Activated B cell treated with CpG ODN at 0.5 μM for 24 hours (primary cell): ENCODE measurements at regions of chr7 and their contacts with region 1.

Region 1: DNA sequence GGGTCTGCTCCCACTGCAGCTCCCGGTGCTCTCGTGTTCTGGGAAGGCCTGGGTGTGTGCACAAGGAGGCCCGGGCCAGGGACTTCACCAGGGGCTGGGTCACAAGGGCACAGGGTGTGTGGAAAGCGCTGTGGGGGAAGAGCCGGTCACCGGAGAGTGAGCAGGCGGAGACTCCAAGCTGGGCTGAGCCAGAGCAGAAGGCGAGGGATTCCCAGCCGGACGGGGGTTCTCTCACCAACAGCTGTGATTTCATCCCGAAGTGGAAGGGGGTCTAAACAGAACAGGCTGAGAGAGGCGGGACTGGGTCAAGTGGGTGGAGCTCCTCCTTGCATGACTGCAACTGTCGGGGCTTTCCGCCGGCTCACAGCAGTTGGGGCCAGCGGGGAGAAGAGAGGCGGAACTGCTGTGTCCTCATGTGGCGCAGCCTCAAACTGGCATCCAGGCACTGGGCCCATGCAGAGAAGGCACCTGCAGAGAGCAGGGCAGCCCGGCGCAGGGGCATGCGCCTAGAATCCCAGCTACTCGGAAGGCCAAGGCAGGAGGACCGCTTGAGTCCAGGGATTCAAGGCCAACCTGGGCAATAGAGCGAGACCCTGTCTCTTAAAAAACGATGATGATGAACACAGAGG is 7.6 kb upstream of the ORAI2 start:
- DNase-seq: peak; percentile 81
- ATAC-seq: peak; percentile 76
- H3K4me3 Mint-ChIP-seq: peak overlapping the region; percentile 76
- H3K27ac Mint-ChIP-seq: peak overlapping the region; percentile 100
- H3K4me1 Mint-ChIP-seq: peaks cover 95% of the 10 kb centered on the region
- H3K27me3 Mint-ChIP-seq: no peaks in the 10 kb centered on the region
- CTCF ChIP-seq: no peak

Region 2: GRCh38 chr7:101308245-101309085 is 1117.3 kb before region 1 on chr7:
- CTCF ChIA-PET with region 1: no interaction called
- POLR2A ChIA-PET with region 1: no interaction called
- intact Hi-C with region 1: no loop called
- DNase-seq: no peak
- ATAC-seq: peak; percentile 77
- H3K4me3 Mint-ChIP-seq: peak overlapping the region; percentile 90
- H3K27ac Mint-ChIP-seq: peak overlapping the region; percentile 35
- H3K4me1 Mint-ChIP-seq: peaks cover 7% of the 10 kb centered on the region
- H3K27me3 Mint-ChIP-seq: peaks cover 31% of the 10 kb centered on the region
- CTCF ChIP-seq: no peak

Region 3: GRCh38 chr7:102193806-102194205 is 231.9 kb before region 1 on chr7:
- CTCF ChIA-PET with region 1: no interaction called
- POLR2A ChIA-PET with region 1: no interaction called
- intact Hi-C with region 1: no loop called
- DNase-seq: no peak
- ATAC-seq: no peak
- H3K4me3 Mint-ChIP-seq: no peak overlapping the region
- H3K27ac Mint-ChIP-seq: no peak overlapping the region
- H3K4me1 Mint-ChIP-seq: no peaks in the 10 kb centered on the region
- H3K27me3 Mint-ChIP-seq: no peaks in the 10 kb centered on the region
- CTCF ChIP-seq: no peak

Region 4: DNA sequence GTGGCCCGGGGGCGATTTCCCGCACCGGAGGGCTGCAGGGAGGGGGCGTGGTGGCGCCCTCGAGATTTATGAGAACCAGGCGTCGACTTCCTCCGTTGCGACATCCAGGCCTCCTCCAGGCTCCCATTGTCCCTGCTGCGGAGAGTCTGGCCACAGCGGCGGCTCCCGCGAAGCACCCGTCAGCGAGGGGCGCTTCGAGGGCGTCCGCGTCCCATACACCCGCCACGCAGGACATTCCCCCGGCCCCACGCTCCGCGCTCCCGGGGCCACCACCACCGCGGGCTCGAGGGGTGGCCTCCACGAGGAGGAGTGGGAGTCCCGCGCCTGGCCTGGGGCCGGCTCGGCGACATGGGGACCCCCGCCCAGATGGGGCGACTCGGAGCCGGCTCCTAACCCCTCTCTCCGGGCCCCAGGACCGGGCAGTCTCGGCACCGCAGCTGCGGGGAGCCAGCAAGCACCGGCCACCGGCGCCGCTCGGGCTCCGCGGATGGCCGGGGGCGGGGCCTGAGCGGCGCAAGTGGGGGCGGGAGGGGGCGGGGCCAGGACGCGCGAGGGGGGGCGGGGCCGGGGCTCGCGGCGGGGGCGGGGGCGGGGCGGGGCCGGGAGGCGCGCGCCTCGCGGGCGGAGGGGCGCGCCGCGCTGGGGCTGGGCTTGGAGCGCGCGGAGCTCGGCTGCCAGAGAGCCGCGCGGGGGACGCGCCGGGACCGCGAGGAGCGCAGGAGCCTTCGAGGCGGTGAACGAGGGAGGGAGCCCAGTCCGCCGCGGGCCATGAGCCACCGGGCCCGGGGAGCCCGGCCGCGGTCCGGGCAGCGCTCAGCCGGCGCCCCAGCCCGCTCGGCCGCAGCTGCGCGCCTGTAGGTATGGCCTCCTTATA is 139.3 kb before region 1 on chr7 and contains the start of gene SH2B2:
- CTCF ChIA-PET with region 1: no interaction called
- POLR2A ChIA-PET with region 1: interaction called, 12 read pairs
- intact Hi-C with region 1: no loop called
- DNase-seq: peak; percentile 83
- ATAC-seq: peak; percentile 38
- H3K4me3 Mint-ChIP-seq: peak within 1 kb of the TSS; percentile 83
- H3K27ac Mint-ChIP-seq: peak within 1 kb of the TSS; percentile 53
- H3K4me1 Mint-ChIP-seq: peaks cover 64% of the 10 kb centered on the region
- H3K27me3 Mint-ChIP-seq: no peaks in the 10 kb centered on the region
- CTCF ChIP-seq: no peak
- total RNA-seq, gene SH2B2: 28.2 and 32.1 TPM in 2 replicates

Region 5: GRCh38 chr7:102404005-102404861 is 21.5 kb before region 1 on chr7:
- CTCF ChIA-PET with region 1: interaction called, 13 read pairs
- POLR2A ChIA-PET with region 1: interaction called, 226 read pairs
- intact Hi-C with region 1: loop called (anchors 1 kb)
- DNase-seq: no peak
- ATAC-seq: peak; percentile 94
- H3K4me3 Mint-ChIP-seq: no peak overlapping the region
- H3K27ac Mint-ChIP-seq: no peak overlapping the region
- H3K4me1 Mint-ChIP-seq: peaks cover 37% of the 10 kb centered on the region
- H3K27me3 Mint-ChIP-seq: no peaks in the 10 kb centered on the region
- CTCF ChIP-seq: no peak

Region 6: DNA sequence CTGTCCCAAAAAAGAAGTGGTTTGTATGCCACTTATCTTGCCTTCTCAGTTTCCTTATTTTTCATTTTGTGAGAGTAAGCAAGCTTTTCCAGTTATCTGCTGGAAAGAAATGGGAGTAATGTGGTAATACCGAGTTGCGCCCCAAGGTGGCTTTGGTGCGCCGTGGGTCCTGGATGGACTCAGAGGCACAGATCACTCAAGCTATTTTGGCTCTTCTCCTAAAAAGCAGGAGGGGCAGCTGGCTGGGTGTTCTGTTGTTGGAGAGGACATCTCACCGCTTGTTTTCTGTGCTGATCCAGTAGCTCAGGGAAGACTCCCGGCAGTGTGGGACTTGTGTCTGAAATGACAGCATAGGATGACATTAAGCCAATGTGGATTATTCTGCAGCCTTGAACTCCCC is 13.2 kb before region 1 on chr7:
- CTCF ChIA-PET with region 1: interaction called, 16 read pairs
- POLR2A ChIA-PET with region 1: interaction called, 226 read pairs
- intact Hi-C with region 1: loop called (anchors 1 kb)
- DNase-seq: no peak
- ATAC-seq: no peak
- H3K4me3 Mint-ChIP-seq: no peak overlapping the region
- H3K27ac Mint-ChIP-seq: peak overlapping the region; percentile 41
- H3K4me1 Mint-ChIP-seq: peaks cover 76% of the 10 kb centered on the region
- H3K27me3 Mint-ChIP-seq: no peaks in the 10 kb centered on the region
- CTCF ChIP-seq: no peak

Region 7: DNA sequence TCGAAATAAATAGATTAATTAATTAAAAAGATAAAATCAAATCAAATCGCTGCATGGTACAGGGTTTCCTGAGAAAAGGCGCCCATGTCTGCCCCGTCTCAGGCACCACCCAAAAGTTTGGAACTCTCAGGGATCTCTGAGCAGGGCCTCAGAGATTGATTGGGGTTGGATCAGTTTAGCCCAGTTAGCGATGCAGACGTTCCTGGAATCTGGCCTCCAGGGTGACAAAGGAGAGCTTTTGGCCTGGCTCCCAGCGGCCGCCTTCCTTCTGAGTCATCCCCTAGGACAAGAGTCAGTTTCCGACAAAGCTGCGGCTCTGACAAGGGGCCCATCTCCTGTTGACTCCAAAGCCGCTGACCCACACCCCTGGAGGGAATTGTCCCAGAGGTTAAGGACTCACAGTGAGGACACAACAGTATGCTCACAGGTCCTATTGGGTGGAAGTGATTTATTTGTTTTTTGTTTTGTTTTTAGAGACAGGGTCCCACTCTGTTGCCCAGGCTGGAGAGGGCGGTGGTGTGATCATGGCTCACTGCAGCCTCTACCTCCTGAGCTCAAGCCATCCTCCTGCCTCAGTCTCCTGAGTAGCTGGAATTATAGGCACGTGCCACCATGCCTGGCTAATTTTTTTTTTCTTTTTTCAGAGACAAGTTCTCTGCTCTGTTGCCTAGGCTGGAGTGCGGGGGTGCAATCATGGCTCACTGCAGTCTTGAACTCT is 14.5 kb after region 1 on chr7:
- CTCF ChIA-PET with region 1: interaction called, 11 read pairs
- POLR2A ChIA-PET with region 1: interaction called, 886 read pairs
- intact Hi-C with region 1: loop called (anchors 1 kb)
- DNase-seq: no peak
- ATAC-seq: no peak
- H3K4me3 Mint-ChIP-seq: no peak overlapping the region
- H3K27ac Mint-ChIP-seq: peak overlapping the region; percentile 93
- H3K4me1 Mint-ChIP-seq: peaks cover 67% of the 10 kb centered on the region
- H3K27me3 Mint-ChIP-seq: no peaks in the 10 kb centered on the region
- CTCF ChIP-seq: no peak

Region 8: GRCh38 chr7:102450242-102450641 is 24.5 kb after region 1 on chr7:
- CTCF ChIA-PET with region 1: interaction called, 14 read pairs
- POLR2A ChIA-PET with region 1: interaction called, 886 read pairs
- intact Hi-C with region 1: no loop called
- DNase-seq: peak; percentile 46
- ATAC-seq: peak; percentile 88
- H3K4me3 Mint-ChIP-seq: no peak overlapping the region
- H3K27ac Mint-ChIP-seq: peak overlapping the region; percentile 63
- H3K4me1 Mint-ChIP-seq: peaks cover 29% of the 10 kb centered on the region
- H3K27me3 Mint-ChIP-seq: no peaks in the 10 kb centered on the region
- CTCF ChIP-seq: no peak